Aorta (tissue), 5 donors: ENCODE measurements at regions of chr13 and their contacts with region 1.

Region 1: GRCh38 chr13:25001476-25002206 is 94.3 kb upstream of the PABPC3 start:
- DNase-seq: no peak
- ATAC-seq: no peak
- H3K4me3 ChIP-seq: no peak overlapping the region
- H3K27ac ChIP-seq: no peak overlapping the region
- H3K4me1 ChIP-seq: no peaks in the 10 kb centered on the region
- H3K27me3 ChIP-seq: no peaks in the 10 kb centered on the region

Region 2: GRCh38 chr13:24943136-24943535 is 58.5 kb before region 1 on chr13:
- intact Hi-C with region 1: no loop called
- DNase-seq: no peak
- ATAC-seq: no peak
- H3K4me3 ChIP-seq: no peak overlapping the region
- H3K27ac ChIP-seq: no peak overlapping the region
- H3K4me1 ChIP-seq: no peaks in the 10 kb centered on the region
- H3K27me3 ChIP-seq: no peaks in the 10 kb centered on the region

Region 3: GRCh38 chr13:25037057-25037813 is 35.6 kb after region 1 on chr13:
- intact Hi-C with region 1: loop called in 1 of 2 experiments (anchors 5 kb)
- DNase-seq: no peak
- ATAC-seq: peak; percentile 63
- H3K4me3 ChIP-seq: no peak overlapping the region
- H3K27ac ChIP-seq: no peak overlapping the region
- H3K4me1 ChIP-seq: no peaks in the 10 kb centered on the region
- H3K27me3 ChIP-seq: no peaks in the 10 kb centered on the region

Region 4: DNA sequence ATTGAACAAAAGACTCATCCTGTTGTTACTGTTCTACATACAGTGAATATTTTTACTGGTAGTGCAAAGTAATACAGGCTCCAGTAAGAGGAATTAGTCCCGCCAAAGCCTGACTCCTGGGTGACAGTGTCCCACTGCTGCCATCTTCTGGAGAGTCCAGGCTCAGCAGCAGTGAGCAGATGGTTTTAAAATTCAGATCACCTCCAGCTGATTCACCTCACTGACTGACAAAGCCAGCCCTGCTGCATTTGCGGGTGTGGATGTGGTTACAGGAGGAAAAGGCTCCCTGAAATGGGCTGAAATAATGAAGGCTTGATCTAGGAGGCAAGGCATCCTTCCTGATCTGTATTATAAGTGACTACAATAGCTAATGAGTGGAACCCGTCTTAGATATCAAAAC is 112.6 kb after region 1 on chr13:
- intact Hi-C with region 1: loop called in 1 of 2 experiments (anchors 10 kb)
- DNase-seq: peak in 1 of 2 donors; percentile 55
- ATAC-seq: peak; percentile 78
- H3K4me3 ChIP-seq: no peak overlapping the region
- H3K27ac ChIP-seq: no peak overlapping the region
- H3K4me1 ChIP-seq: no peaks in the 10 kb centered on the region
- H3K27me3 ChIP-seq: no peaks in the 10 kb centered on the region

Region 5: DNA sequence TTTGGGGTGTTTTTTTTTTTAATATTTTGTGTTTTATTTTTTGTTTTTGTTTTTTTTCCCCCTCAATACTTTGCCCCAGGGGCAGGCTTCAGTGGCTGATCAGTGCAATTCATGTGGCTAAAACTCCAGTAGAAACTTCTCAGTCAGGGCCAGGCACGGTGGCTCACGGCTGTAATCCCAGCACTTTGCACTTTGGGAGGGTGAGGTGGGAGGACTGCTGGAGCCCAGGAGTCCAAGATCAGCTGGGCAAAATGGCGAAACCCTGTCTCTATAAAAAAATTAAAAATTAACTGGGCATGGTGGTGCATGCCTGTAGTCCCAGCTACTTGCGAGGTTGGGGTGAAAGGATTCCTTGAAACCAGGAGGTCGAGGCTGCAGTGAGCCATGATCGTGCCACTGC is 352.7 kb after region 1 on chr13:
- intact Hi-C with region 1: no loop called
- DNase-seq: no peak
- ATAC-seq: no peak
- H3K4me3 ChIP-seq: no peak overlapping the region
- H3K27ac ChIP-seq: no peak overlapping the region
- H3K4me1 ChIP-seq: no peaks in the 10 kb centered on the region
- H3K27me3 ChIP-seq: no peaks in the 10 kb centered on the region